ENCODE measurements at regions of chr14 and their contacts with region 1.

Region 1: GRCh38 chr14:55051426-55052268 is at the start of gene MAPK1IP1L:
- DNase-seq: peak; percentile 86 to 99 (median 92)
- ATAC-seq: peak; percentile 97
- H3K4me3 ChIP-seq: peak within 1 kb of the TSS; percentile 93
- H3K4me3 Mint-ChIP-seq: peak within 1 kb of the TSS; percentile 88 to 94 (median 92)
- H3K27ac ChIP-seq: peak within 1 kb of the TSS; percentile 100
- H3K27ac Mint-ChIP-seq: peak within 1 kb of the TSS; percentile 87 to 97 (median 96)
- H3K4me1 ChIP-seq: peaks cover 26 to 32% of the 10 kb centered on the region in 2 donors
- H3K4me1 Mint-ChIP-seq: peaks cover 17 to 54% (median 39%) of the 10 kb centered on the region in 7 donors
- H3K27me3 ChIP-seq: no peaks in the 10 kb centered on the region
- H3K27me3 Mint-ChIP-seq: no peaks in the 10 kb centered on the region
- total RNA-seq, gene MAPK1IP1L: 65.1 to 143 (median 111) TPM

Region 2: DNA sequence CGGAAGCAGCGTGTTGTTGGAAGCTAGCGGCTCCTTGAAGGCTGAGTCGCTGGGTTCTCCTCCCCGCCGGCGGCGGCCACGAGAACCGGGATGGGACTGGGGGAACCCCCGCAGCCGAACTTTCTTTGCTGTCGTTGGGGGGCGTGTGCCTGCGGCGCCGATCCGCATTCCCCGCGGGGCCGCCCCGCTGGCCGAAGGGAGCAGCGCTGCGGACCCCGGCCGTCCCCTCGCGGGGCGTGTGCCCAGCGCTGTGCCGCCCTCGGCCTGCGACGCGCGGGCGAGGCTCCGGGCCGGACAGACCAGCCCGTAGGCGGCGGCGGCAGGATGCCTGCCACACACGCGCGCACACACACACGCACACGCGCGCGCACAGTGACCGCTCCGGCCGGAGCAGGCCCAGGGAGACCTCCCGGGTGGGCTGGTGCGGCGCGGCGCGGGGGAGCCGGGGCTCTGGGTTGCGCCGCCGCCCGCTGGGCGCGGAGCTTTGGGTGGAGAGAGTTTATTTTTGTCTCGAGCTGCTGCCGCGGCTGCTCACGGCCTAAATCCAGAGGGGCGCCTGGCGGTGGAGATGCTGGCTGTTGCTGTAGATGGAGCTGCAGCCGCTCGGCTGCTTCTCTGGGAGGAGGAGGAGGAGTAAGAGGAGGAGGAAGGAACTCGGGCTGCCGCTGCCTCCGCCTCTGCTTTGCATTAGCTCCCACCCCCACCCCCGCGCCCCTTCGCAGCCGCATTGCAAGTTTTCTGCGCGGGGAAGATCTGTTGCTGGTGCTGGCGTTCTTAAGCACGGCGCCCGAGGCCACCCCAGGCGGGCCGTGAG is 485.0 kb before region 1 on chr14 and contains the start of gene SAMD4A:
- CTCF ChIA-PET with region 1: no interaction called
- POLR2A ChIA-PET with region 1: no interaction called
- intact Hi-C with region 1: loop called in 1 of 2 experiments (anchors 1 kb)
- DNase-seq: peak; percentile 32 to 68 (median 53)
- ATAC-seq: peak; percentile 46
- H3K4me3 ChIP-seq: peak within 1 kb of the TSS; percentile 74
- H3K4me3 Mint-ChIP-seq: peak within 1 kb of the TSS; percentile 91 to 97 (median 94)
- H3K27ac ChIP-seq: peak within 1 kb of the TSS; percentile 56
- H3K27ac Mint-ChIP-seq: peak within 1 kb of the TSS in 8 of 9 donors; percentile 28 to 92 (median 66)
- H3K4me1 ChIP-seq: peaks cover 9 to 11% of the 10 kb centered on the region in 2 donors
- H3K4me1 Mint-ChIP-seq: peaks cover 5 to 19% (median 14%) of the 10 kb centered on the region in 7 donors
- H3K27me3 ChIP-seq: peaks cover 0 to 12% of the 10 kb centered on the region in 2 donors
- H3K27me3 Mint-ChIP-seq: peaks cover 0 to 51% (median 6%) of the 10 kb centered on the region in 5 donors
- total RNA-seq, gene SAMD4A: 0.73 to 5.7 (median 1.7) TPM

Region 3: GRCh38 chr14:55071870-55072640 is 20.4 kb after region 1 on chr14:
- CTCF ChIA-PET with region 1: interaction called, 7 read pairs
- POLR2A ChIA-PET with region 1: interaction called, 5 read pairs
- intact Hi-C with region 1: loop called in 1 of 2 experiments (anchors 1 kb)
- DNase-seq: peak in 5 of 9 donors; percentile 28 to 49 (median 37)
- ATAC-seq: peak; percentile 80
- H3K4me3 ChIP-seq: peak overlapping the region; percentile 10
- H3K4me3 Mint-ChIP-seq: peak overlapping the region; percentile 39 to 83 (median 73)
- H3K27ac ChIP-seq: peak overlapping the region; percentile 39
- H3K27ac Mint-ChIP-seq: peak overlapping the region; percentile 64 to 95 (median 90)
- H3K4me1 ChIP-seq: peaks cover 0 to 10% of the 10 kb centered on the region in 2 donors
- H3K4me1 Mint-ChIP-seq: peaks cover 10 to 42% (median 28%) of the 10 kb centered on the region in 7 donors
- H3K27me3 ChIP-seq: no peaks in the 10 kb centered on the region
- H3K27me3 Mint-ChIP-seq: no peaks in the 10 kb centered on the region

Region 4: GRCh38 chr14:55122509-55122953 is 70.9 kb after region 1 on chr14:
- CTCF ChIA-PET with region 1: no interaction called
- POLR2A ChIA-PET with region 1: no interaction called
- intact Hi-C with region 1: no loop called
- DNase-seq: no peak
- ATAC-seq: no peak
- H3K4me3 ChIP-seq: no peak overlapping the region
- H3K4me3 Mint-ChIP-seq: no peak overlapping the region
- H3K27ac ChIP-seq: no peak overlapping the region
- H3K27ac Mint-ChIP-seq: no peak overlapping the region
- H3K4me1 ChIP-seq: peaks cover 0 to 8% of the 10 kb centered on the region in 2 donors
- H3K4me1 Mint-ChIP-seq: peaks cover 0 to 22% (median 6%) of the 10 kb centered on the region in 7 donors
- H3K27me3 ChIP-seq: no peaks in the 10 kb centered on the region
- H3K27me3 Mint-ChIP-seq: peaks cover 5 to 44% (median 9%) of the 10 kb centered on the region in 5 donors

Region 5: DNA sequence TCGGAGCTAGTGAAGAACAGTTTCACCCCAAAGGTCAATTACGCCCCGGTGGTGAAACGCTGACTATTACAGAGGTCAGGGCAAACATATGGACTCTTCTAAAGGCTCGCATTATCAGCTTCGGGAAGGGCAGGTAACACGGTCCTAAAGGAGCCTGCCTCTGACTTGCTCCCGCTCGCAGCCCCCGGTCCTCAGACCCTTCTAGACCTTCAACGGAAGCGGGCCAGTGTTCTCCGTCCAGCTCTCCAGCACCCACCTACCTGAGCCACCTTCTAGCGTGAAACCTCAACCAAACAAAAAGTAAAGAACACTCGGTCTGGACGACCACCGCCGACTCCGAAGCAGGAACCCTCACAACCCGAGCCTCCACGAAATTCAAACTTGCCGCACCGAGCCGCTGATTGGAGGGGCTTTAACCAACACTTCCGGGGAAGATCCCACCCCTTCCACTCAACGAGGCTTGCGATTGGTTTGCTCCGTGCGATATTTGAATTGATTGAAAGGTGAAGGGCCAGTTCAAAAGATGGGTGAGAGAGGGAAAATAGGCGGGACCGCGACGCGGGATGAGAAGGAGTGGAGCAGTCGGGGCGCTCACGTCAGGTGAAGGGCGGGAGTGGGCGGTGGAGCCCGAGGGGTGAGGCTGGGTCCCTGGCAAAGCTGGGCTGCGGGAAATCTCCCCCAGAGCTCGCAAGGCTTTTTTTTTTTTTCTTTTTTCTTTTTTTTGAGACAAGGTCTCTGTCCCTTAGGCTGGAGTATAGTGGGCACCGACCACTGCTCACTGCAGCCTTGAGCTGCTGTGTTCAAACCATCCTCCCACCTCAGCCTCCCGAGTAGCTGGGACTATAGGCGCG is 139.8 kb after region 1 on chr14 and contains the start of gene DLGAP5:
- CTCF ChIA-PET with region 1: interaction called, 3 read pairs
- POLR2A ChIA-PET with region 1: no interaction called
- intact Hi-C with region 1: loop called (anchors 1 kb)
- DNase-seq: peak; percentile 59 to 90 (median 86)
- ATAC-seq: peak; percentile 98
- H3K4me3 ChIP-seq: peak within 1 kb of the TSS; percentile 84
- H3K4me3 Mint-ChIP-seq: peak within 1 kb of the TSS; percentile 88 to 97 (median 90)
- H3K27ac ChIP-seq: peak within 1 kb of the TSS; percentile 58
- H3K27ac Mint-ChIP-seq: peak within 1 kb of the TSS; percentile 46 to 92 (median 68)
- H3K4me1 ChIP-seq: peaks cover 7 to 10% of the 10 kb centered on the region in 2 donors
- H3K4me1 Mint-ChIP-seq: peaks cover 5 to 42% (median 18%) of the 10 kb centered on the region in 7 donors
- H3K27me3 ChIP-seq: no peaks in the 10 kb centered on the region
- H3K27me3 Mint-ChIP-seq: peaks cover 0 to 4% (median 0%) of the 10 kb centered on the region in 5 donors
- total RNA-seq, gene DLGAP5: 0.49 to 46.7 TPM in 2 of 5 experiments, not detected in the others

Region 6: DNA sequence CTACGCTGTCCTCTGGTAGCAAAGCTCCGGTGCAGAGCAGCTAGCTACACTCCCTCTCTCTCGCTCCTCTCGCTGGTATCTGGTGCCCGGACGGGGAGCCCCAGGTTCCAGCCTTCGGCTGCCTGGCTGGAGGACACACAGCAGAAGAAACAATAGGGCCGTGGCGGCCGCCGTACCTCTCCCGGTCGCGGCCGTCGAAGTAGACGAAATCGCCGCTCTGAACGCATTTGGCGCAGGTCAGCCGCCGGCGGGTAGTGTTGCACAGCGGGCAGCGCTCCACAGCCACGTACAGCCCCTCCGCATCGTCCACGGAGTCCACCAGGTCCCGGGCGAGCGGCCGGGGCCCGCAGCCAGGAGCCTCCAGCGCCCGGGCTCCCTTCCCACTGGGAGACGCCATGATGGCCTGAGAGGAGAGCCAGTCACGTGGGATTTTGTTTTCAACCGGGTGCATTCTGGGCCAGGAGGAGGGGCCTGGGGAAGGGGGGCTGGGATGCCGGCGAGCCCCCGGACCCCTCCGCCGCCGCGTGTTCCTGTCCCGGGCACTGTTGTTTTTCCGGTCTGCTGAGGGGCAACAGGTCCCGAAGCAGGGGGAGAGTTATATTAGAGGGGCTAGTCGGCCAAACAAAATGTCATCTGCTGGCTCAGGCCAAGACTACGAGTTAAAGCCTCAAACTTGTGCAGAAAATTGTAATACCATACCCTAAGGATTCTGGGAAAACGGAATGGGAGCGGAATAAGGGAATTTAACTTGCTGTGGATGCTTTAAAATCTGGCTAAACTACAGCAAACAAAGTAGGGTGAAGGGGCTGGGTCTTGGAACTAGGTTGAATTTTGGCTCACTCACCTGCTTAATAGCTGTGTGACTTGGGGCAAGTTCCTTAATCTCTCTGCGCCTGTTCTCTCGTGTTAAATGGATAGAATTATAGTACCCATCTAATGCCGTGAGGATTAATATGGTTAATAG is 360.1 kb after region 1 on chr14 and contains the start of gene ATG14:
- CTCF ChIA-PET with region 1: no interaction called
- POLR2A ChIA-PET with region 1: no interaction called
- intact Hi-C with region 1: loop called in 1 of 2 experiments (anchors 5 kb)
- DNase-seq: peak; percentile 48 to 78 (median 66)
- ATAC-seq: peak; percentile 98
- H3K4me3 ChIP-seq: peak within 1 kb of the TSS; percentile 68
- H3K4me3 Mint-ChIP-seq: peak within 1 kb of the TSS; percentile 68 to 94 (median 92)
- H3K27ac ChIP-seq: peak within 1 kb of the TSS; percentile 86
- H3K27ac Mint-ChIP-seq: peak within 1 kb of the TSS; percentile 86 to 95 (median 90)
- H3K4me1 ChIP-seq: peaks cover 11 to 16% of the 10 kb centered on the region in 2 donors
- H3K4me1 Mint-ChIP-seq: peaks cover 26 to 56% (median 39%) of the 10 kb centered on the region in 7 donors
- H3K27me3 ChIP-seq: no peaks in the 10 kb centered on the region
- H3K27me3 Mint-ChIP-seq: peaks cover 0 to 5% (median 0%) of the 10 kb centered on the region in 5 donors
- total RNA-seq, gene ATG14: 7.8 to 19.6 (median 18.8) TPM

Region 7: DNA sequence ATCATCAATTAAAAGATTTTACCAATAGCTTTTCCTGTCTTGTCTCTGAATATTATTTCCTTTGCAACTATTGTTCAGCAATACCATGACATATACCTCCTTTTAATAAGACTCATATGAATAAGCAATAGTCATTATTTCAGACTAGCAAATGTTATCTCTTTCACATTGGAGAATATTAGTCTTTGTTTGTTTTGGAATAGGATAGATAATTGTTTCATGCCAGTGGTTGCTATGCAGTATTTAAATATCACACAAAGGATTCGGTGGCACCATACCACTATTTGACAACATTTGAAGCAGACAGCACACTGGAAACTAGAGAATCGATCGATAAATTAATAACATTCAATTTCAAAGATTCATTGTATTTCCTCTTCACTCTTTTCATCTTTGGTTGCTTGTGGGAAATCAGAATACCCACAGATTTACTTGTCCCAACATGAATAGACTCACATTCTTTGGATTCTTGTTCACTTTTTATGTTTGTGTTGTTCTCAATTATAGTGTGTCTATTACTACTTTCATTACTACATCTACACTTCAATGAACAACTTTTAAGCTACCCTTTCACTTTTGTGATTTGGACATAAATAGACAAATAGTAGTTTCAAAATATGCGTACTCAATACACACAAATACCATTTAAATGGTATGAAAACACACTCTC is 431.4 kb after region 1 on chr14:
- CTCF ChIA-PET with region 1: no interaction called
- POLR2A ChIA-PET with region 1: no interaction called
- intact Hi-C with region 1: no loop called
- DNase-seq: no peak
- ATAC-seq: no peak
- H3K4me3 ChIP-seq: no peak overlapping the region
- H3K4me3 Mint-ChIP-seq: no peak overlapping the region
- H3K27ac ChIP-seq: no peak overlapping the region
- H3K27ac Mint-ChIP-seq: peak overlapping the region in 1 of 9 donors; percentile 62
- H3K4me1 ChIP-seq: no peaks in the 10 kb centered on the region
- H3K4me1 Mint-ChIP-seq: no peaks in the 10 kb centered on the region
- H3K27me3 ChIP-seq: peaks cover 0 to 2% of the 10 kb centered on the region in 2 donors
- H3K27me3 Mint-ChIP-seq: peaks cover 0 to 5% (median 0%) of the 10 kb centered on the region in 5 donors

Measured in naive thymus-derived CD4-positive, alpha-beta T cell (primary cell).